ENCODE measurements at regions of chr7 and their contacts with region 1.

Region 1: DNA sequence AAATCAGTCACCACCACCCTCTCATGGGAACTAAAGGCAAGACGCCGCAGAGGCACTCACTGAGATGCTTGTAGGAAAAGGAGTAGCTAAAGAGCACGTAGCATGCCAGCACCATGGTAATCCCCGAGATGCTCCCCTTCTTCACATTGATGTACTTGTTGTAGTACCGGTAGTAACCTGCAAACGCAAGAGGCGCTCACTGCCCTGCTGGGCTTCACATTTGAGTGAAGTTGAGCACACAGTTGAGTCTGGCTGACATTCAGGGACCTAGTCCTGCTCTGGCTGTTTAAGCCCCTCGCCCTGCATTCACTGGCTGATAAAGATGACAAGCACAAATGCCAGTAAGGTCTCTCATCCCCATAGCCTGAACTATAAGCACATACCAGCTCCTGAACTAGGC is 6.9 kb downstream of the ATP5MF start:
- DNase-seq: no peak
- H3K4me3 ChIP-seq: no peak overlapping the region
- H3K27ac ChIP-seq: no peak overlapping the region
- H3K4me1 ChIP-seq: no peaks in the 10 kb centered on the region
- H3K27me3 ChIP-seq: no peaks in the 10 kb centered on the region
- CTCF ChIP-seq: no peak
- POLR2A ChIP-seq: no peak

Region 2: DNA sequence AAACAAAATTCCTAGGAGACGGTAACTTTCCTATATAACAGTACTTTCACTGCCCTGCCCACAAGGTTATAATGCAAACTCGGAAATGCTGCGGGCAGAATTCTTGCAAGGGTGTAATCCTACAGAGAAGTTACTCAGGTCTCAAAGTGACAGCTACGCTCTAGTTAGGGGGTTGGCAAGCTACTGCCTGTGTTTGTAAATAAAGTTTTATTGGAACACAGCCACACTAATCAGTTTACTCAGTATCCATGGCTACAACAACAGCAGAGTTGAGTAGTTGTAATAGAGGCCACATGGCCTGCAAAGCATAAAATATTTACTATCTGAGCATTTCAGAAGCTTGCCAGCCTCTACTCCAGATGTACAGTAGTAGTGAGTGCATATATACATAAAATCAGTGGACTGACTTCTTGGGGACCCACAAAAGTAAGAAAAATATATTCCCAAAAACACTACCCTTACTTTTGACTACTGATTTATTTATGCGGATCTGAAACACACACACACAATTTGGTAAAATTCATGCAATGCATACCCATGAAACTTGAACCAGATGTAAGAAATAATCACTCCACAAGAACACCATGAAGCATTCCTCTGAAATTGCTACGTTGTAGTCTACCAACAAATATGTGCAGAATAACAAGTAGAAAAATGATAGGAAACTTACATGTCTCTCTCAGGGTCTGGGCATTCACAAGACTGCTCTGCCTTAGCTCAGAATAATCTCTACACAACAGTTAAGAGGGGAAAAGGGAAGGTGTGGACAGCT is 368.1 kb before region 1 on chr7:
- intact Hi-C with region 1: no loop called
- DNase-seq: no peak
- H3K4me3 ChIP-seq: no peak overlapping the region
- H3K27ac ChIP-seq: no peak overlapping the region
- H3K4me1 ChIP-seq: peaks cover 0 to 4% of the 10 kb centered on the region in 2 donors
- H3K27me3 ChIP-seq: no peaks in the 10 kb centered on the region
- CTCF ChIP-seq: no peak
- POLR2A ChIP-seq: no peak

Region 3: GRCh38 chr7:99447943-99448342 is 11.1 kb before region 1 on chr7:
- intact Hi-C with region 1: loop called (anchors 1 kb)
- DNase-seq: no peak
- H3K4me3 ChIP-seq: no peak overlapping the region
- H3K27ac ChIP-seq: no peak overlapping the region
- H3K4me1 ChIP-seq: no peaks in the 10 kb centered on the region
- H3K27me3 ChIP-seq: no peaks in the 10 kb centered on the region
- CTCF ChIP-seq: no peak
- POLR2A ChIP-seq: no peak